RWPE1 (cell line): ENCODE measurements at regions of chr7 and their contacts with region 1.

Region 1: GRCh38 chr7:116525913-116526861 is 1.4 kb downstream of the CAV1 start:
- DNase-seq: peak; percentile 82
- H3K27ac ChIP-seq: peak overlapping the region; percentile 100
- CTCF ChIP-seq: peak; percentile 98

Region 2: DNA sequence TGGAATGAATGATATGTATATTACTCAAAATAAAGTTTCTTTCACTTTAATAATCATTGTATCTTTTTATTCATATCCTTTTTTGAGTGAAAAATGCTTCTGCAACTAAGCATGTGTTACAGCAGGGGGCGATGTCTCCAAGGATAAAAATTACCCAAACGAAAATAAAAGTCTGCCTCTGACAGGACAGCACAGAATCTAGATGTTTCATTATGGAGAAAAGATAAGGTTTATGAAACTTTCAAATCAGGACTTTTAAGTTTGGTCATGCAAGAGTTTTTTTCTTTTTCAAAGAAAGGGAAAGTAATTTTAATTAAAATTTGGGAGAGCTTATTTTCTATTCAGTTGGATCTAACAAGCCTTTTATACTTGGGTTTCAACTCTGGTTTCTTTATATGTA is 267.5 kb before region 1 on chr7:
- CTCF ChIA-PET with region 1: interaction called, 44 read pairs
- POLR2A ChIA-PET with region 1: interaction called, 3 read pairs
- DNase-seq: peak; percentile 50
- H3K27ac ChIP-seq: no peak overlapping the region
- CTCF ChIP-seq: peak; percentile 90

Region 3: DNA sequence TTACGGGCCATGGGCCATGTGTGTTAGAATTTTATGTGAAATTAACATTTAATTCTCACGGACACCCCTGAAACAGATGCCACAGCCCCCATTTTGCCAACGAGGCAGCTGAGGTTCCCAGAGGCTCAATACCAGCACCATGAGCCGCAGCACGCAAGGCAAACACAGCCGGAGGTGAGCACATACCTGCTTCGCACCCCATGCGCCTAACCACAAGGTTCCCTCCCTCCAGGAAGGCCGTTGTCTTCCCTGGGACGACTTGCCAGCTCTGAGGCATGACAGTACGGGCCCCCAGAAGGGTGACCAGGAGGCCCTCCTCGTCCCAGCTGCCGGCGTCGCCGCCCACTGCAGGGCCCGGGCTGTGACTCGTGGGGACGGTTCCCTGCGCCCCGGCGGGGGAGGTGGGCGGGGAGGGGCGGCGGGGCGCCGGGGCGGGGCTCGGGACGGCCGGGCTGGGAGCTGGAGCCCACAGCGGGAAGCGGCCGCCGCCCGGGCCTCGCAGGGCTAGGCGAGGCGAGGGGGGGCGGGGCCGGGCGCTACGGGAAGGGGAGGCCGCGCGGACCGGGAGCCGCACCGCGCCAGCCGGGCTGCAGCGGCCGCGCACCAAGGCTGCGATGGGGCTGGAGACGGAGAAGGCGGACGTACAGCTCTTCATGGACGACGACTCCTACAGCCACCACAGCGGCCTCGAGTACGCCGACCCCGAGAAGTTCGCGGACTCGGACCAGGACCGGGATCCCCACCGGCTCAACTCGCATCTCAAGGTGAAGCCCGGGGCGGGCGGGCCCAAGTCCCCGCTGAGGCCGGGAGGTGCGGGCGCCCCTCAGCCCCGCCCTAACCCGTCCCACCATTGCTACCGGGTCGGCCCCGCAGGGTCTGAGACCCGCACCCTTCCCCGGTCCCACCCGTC is 26.8 kb before region 1 on chr7 and contains the start of gene CAV2:
- CTCF ChIA-PET with region 1: interaction called, 12 read pairs
- POLR2A ChIA-PET with region 1: interaction called, 6 read pairs
- DNase-seq: peak; percentile 74
- H3K27ac ChIP-seq: peak within 1 kb of the TSS; percentile 98
- CTCF ChIP-seq: no peak

Region 4: GRCh38 chr7:116812860-116813259 is 286.7 kb after region 1 on chr7:
- CTCF ChIA-PET with region 1: no interaction called
- POLR2A ChIA-PET with region 1: no interaction called
- DNase-seq: no peak
- H3K27ac ChIP-seq: no peak overlapping the region
- CTCF ChIP-seq: no peak

Region 5: GRCh38 chr7:117259615-117260014 is 733.4 kb after region 1 on chr7:
- CTCF ChIA-PET with region 1: no interaction called
- POLR2A ChIA-PET with region 1: no interaction called
- DNase-seq: no peak
- H3K27ac ChIP-seq: no peak overlapping the region
- CTCF ChIP-seq: no peak